Activated CD8-positive, alpha-beta T cell treated with anti-CD3 and anti-CD28 coated beads for 36 hours (primary cell): ENCODE measurements at regions of chr16 and their contacts with region 1.

Region 1: GRCh38 chr16:46689365-46690280 is at the start of gene ORC6:
- DNase-seq: peak; percentile 99
- ATAC-seq: peak; percentile 80
- H3K4me3 Mint-ChIP-seq: no peak within 1 kb of the TSS
- H3K27ac Mint-ChIP-seq: no peak within 1 kb of the TSS
- H3K4me1 Mint-ChIP-seq: peaks cover 41% of the 10 kb centered on the region
- H3K27me3 Mint-ChIP-seq: no peaks in the 10 kb centered on the region
- CTCF ChIP-seq: peak; percentile 69
- total RNA-seq, gene ORC6: 49.2 to 51.6 TPM

Region 2: GRCh38 chr16:46673320-46674013 is 16.2 kb before region 1 on chr16:
- CTCF ChIA-PET with region 1: interaction called, 15 read pairs
- POLR2A ChIA-PET with region 1: interaction called, 3 read pairs
- intact Hi-C with region 1: no loop called
- DNase-seq: peak; percentile 66
- ATAC-seq: peak; percentile 96
- H3K4me3 Mint-ChIP-seq: no peak overlapping the region
- H3K27ac Mint-ChIP-seq: no peak overlapping the region
- H3K4me1 Mint-ChIP-seq: no peaks in the 10 kb centered on the region
- H3K27me3 Mint-ChIP-seq: no peaks in the 10 kb centered on the region
- CTCF ChIP-seq: peak; percentile 97

Region 3: GRCh38 chr16:46701615-46702014 is 12.0 kb after region 1 on chr16:
- CTCF ChIA-PET with region 1: interaction called, 13 read pairs
- POLR2A ChIA-PET with region 1: interaction called, 7 read pairs
- intact Hi-C with region 1: no loop called
- DNase-seq: no peak
- ATAC-seq: no peak
- H3K4me3 Mint-ChIP-seq: no peak overlapping the region
- H3K27ac Mint-ChIP-seq: no peak overlapping the region
- H3K4me1 Mint-ChIP-seq: no peaks in the 10 kb centered on the region
- H3K27me3 Mint-ChIP-seq: no peaks in the 10 kb centered on the region
- CTCF ChIP-seq: no peak

Region 4: DNA sequence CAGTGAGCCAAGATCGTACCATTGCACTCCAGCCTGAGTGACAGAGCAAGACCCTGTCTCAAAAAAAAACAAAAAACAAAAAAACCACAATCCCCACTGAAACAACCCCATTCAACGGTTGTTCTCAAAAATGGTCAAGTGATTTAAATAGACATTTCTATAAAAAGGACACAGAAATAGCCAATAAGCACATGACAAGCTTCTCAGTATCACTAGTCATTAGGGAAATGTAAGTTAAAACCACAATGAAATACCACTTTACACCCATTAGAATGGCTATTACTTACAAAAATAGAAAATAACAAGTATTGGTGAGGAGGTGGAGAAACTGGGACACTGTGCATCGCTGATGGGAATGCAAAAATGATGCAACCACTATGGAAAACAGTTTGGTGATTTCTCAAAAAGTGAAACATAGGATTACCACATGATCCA is 85.1 kb after region 1 on chr16:
- CTCF ChIA-PET with region 1: no interaction called
- POLR2A ChIA-PET with region 1: no interaction called
- intact Hi-C with region 1: no loop called
- DNase-seq: no peak
- ATAC-seq: no peak
- H3K4me3 Mint-ChIP-seq: no peak overlapping the region
- H3K27ac Mint-ChIP-seq: no peak overlapping the region
- H3K4me1 Mint-ChIP-seq: no peaks in the 10 kb centered on the region
- H3K27me3 Mint-ChIP-seq: peaks cover 1% of the 10 kb centered on the region
- CTCF ChIP-seq: no peak

Region 5: DNA sequence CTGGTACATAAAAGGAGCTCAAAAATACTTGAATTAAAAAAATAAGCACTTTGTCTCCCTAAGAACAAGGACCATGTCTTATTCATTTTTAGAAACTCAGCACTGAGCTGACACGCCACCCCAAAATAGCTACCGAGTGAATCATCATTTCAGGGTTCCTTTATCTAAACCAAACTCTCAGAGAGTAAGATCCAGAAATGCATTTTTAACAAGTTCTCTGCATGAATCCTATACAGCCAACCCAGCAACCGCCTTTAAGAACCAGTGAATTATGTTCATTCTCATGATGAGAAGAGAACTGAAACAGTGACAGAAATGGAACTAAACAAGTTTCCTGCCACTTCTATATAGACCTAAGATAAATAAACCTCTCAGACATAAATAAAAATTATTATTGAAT is 132.6 kb after region 1 on chr16:
- CTCF ChIA-PET with region 1: interaction called, 3 read pairs
- POLR2A ChIA-PET with region 1: interaction called, 3 read pairs
- intact Hi-C with region 1: loop called (anchors 10 kb)
- DNase-seq: peak; percentile 44
- ATAC-seq: peak; percentile 88
- H3K4me3 Mint-ChIP-seq: no peak overlapping the region
- H3K27ac Mint-ChIP-seq: no peak overlapping the region
- H3K4me1 Mint-ChIP-seq: peaks cover 27% of the 10 kb centered on the region
- H3K27me3 Mint-ChIP-seq: no peaks in the 10 kb centered on the region
- CTCF ChIP-seq: no peak

Region 6: DNA sequence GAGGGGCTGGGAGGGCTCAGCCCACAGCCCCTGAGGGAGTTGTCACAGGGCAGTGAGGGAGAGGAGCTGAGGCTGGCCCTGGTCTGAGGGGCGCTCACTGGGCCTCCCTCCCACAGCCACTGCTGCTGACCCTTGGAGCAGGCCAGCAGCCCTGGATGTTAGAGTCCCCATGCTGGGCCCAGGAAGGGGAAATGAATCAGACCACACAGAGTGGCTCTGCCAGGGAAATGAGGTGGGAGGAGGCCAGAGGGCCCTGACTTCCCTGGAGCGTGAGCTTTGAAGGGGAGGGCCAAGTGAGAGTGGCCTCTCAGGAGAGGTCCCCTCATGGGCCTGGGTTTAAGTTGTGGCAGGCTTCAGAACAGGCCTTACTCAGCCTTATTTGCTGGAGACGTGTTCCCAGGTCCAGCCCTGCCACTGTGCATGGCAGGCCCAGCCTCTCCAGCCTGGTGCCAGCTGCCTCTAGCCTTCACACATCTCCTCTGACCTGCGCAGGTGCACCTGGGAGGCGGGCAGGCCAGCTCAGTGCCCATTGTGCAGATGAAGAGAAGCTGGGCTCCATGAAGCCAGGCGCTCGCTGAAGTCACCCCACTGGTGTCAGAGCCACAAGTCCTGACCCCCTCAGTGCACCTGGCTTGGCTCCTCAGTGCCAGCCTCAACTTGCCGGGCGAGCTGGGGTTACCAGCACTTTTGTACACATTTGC is 210.0 kb after region 1 on chr16:
- CTCF ChIA-PET with region 1: no interaction called
- POLR2A ChIA-PET with region 1: no interaction called
- intact Hi-C with region 1: no loop called
- DNase-seq: no peak
- ATAC-seq: no peak
- H3K4me3 Mint-ChIP-seq: no peak overlapping the region
- H3K27ac Mint-ChIP-seq: no peak overlapping the region
- H3K4me1 Mint-ChIP-seq: no peaks in the 10 kb centered on the region
- H3K27me3 Mint-ChIP-seq: no peaks in the 10 kb centered on the region
- CTCF ChIP-seq: no peak